ENCODE measurements at regions of chr17 and their contacts with region 1.

Region 1: GRCh38 chr17:68679874-68680273 is 78.7 kb upstream of the FAM20A start:
- DNase-seq: no peak
- ATAC-seq: no peak

Region 2: DNA sequence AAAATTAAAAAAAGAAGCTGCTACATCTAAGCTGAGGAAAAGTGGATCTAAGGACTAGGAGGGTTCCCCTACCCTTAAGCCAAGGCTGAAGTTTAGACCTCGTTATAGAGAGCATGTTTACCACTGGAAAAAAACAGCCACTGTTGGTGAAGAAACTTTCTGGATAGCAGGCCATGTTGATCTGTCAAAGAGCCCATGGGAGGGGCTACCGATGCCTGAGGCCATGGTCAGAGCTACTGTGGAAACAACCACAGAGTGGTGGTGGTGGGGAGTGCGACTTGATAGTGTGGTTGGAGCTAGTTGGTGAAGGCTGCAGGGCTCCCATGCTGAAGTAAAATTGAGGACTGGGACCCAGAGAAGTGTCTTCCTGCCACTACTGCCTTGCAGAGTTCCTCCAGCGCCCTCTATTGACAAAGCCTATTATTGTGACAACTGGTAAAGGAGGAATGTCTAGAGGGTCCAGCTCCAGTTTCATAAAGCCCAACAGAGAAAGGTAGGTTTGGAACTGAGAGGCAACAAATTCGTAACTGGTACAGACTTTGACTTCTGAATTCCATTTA is 66.1 kb before region 1 on chr17:
- intact Hi-C with region 1: no loop called
- DNase-seq: no peak
- ATAC-seq: peak; percentile 81

Region 3: DNA sequence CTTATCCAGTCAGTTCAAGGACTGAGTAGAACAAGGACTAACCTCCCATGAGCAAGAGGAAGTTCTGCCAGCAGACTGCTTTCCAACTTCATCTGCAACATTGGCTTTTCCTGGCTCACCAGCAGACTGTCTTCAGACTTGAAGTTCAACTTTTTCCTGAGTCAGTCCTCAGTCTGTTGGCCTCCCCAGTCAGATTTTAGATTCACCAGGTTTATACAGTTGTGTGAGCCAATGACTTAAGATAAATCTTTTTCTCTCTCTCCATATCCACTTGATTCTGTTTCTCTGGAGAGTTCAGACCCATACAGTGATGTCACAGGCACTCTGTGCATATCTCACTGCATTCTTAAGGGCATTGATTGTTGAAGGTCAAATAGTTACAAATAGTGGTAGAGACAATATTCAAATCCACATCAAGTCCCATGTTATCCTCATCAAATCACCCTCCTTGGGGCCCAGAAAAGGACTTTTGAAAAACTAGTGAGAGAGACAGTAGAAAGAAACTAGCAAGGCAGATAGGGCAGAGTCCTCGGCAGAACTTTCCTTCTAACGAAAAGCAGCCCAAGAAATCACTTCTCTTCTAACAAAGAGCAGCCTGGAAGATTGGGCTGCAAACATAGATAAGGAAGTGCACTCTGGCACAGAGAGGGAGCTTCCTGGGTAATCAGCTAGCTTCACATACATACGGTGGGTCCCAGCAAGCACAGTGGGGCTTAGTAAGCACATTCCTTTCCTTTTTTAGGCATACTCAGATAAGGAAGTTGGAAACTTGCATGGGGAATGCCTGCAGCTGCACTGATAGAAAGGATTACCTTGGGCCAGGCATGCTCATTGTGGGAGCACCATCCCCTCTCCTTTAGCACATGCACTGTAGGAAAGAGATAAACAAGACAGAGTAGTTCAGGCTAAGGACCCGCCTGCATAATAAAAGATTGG is 53.6 kb after region 1 on chr17:
- intact Hi-C with region 1: loop called (anchors 1 kb)
- DNase-seq: no peak
- ATAC-seq: peak; percentile 73